Calu3 (cell line): ENCODE measurements at regions of chr9 and their contacts with region 1.

Region 1: DNA sequence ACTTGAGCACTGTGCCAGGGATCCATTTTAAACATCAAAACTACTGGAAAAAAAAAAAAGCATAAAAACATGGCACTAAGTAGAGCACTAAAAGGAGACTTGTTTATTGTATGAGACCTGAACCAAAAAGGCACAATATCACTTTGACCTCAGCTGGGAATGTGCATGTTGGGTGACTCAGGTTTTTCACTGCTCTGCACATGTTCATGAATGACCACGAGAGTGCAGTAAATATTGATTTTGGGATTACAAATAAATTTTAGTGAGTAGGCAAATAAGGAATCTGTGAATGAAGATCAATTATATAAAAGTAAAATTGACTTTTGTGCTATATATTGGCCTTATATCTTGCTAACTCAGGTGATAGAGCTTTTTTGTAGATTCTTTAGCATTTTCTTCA is 11.8 kb downstream of the RMI1 start:
- DNase-seq: no peak
- H3K4me3 Mint-ChIP-seq: no peak overlapping the region
- H3K27ac Mint-ChIP-seq: no peak overlapping the region
- H3K4me1 Mint-ChIP-seq: peaks cover 2% of the 10 kb centered on the region
- H3K27me3 Mint-ChIP-seq: no peaks in the 10 kb centered on the region
- CTCF ChIP-seq: no peak

Region 2: GRCh38 chr9:84061594-84062193 is 69.3 kb after region 1 on chr9:
- CTCF ChIA-PET with region 1: no interaction called
- intact Hi-C with region 1: no loop called
- DNase-seq: no peak
- H3K4me3 Mint-ChIP-seq: no peak overlapping the region
- H3K27ac Mint-ChIP-seq: no peak overlapping the region
- H3K4me1 Mint-ChIP-seq: no peaks in the 10 kb centered on the region
- H3K27me3 Mint-ChIP-seq: peaks cover 12% of the 10 kb centered on the region
- CTCF ChIP-seq: no peak

Region 3: GRCh38 chr9:84072621-84073180 is 80.3 kb after region 1 on chr9:
- CTCF ChIA-PET with region 1: no interaction called
- intact Hi-C with region 1: no loop called
- DNase-seq: no peak
- H3K4me3 Mint-ChIP-seq: no peak overlapping the region
- H3K27ac Mint-ChIP-seq: no peak overlapping the region
- H3K4me1 Mint-ChIP-seq: peaks cover 9% of the 10 kb centered on the region
- H3K27me3 Mint-ChIP-seq: no peaks in the 10 kb centered on the region
- CTCF ChIP-seq: no peak

Region 4: DNA sequence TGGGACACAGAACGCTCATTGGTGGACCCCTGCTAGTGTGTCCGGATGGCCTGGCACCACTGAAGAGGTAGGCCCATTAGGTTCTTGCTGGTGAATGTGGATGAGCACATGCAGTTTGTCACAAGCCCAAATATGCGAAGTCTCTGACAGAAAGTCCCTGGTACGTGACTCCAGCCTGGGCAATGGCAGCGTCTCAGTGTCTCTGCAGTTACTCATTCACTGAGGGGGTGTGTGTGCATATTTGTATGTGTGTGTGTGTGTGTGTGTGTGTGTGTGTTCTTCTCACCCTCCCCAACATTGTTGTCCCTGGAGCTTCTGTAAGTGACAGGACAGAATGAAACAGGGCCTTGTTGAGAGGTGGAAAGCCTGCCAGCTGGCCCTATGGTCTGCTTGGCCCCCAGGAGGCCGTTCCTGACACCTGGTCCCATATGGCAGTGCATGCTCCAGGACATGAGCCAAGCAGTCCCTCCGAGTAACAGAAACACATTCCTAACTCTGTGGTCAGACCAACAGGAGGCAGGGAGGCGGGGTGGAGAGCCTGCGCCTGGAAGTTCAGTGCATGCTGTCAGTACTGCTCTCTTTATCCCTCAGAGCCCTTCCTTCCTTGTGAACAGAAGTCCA is 178.2 kb after region 1 on chr9:
- CTCF ChIA-PET with region 1: no interaction called
- intact Hi-C with region 1: loop called (anchors 5 kb)
- DNase-seq: peak; percentile 14
- H3K4me3 Mint-ChIP-seq: no peak overlapping the region
- H3K27ac Mint-ChIP-seq: no peak overlapping the region
- H3K4me1 Mint-ChIP-seq: no peaks in the 10 kb centered on the region
- H3K27me3 Mint-ChIP-seq: peaks cover 12% of the 10 kb centered on the region
- CTCF ChIP-seq: no peak

Region 5: DNA sequence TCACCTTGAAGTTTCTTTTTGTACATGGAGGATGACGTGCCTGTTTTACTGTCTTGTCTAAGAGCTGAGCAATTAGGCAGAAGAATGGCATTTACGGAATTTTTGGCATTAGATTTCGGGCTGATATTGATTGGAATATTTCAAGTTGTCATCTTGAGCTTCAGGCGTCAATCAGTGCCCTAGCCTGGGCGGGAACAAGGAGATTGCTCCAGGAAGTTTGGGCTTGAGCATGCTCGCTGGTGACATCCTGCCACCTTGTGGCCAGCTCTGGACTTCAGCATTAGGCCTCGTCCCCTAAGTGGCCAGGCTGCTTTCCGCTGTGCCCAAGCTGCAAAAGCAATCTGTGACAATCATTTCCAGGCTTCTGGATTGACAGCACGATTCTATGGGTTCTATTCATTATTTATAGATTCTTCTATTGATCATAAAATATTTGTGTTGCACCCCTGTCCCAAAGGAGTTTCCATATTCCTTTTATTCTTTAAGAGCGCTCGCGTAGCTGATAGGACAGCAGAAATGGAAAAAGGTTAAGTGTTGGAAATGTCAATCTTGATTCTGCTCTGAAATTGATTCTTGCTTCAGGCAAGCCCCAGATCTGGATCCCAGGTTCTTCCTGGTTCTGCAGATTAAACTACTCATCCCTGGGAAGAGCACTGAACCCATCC is 268.8 kb after region 1 on chr9:
- CTCF ChIA-PET with region 1: interaction called, 3 read pairs
- intact Hi-C with region 1: loop called (anchors 5 kb)
- DNase-seq: peak; percentile 80
- H3K4me3 Mint-ChIP-seq: no peak overlapping the region
- H3K27ac Mint-ChIP-seq: no peak overlapping the region
- H3K4me1 Mint-ChIP-seq: no peaks in the 10 kb centered on the region
- H3K27me3 Mint-ChIP-seq: no peaks in the 10 kb centered on the region
- CTCF ChIP-seq: peak; percentile 62